CD4-positive, alpha-beta T cell (primary cell): ENCODE measurements at regions of chr7 and their contacts with region 1.

Region 1: GRCh38 chr7:99918959-99919813 is at the start of gene TRIM4:
- DNase-seq: peak; percentile 78 to 95 (median 86)
- ATAC-seq: peak; percentile 97
- H3K4me3 ChIP-seq: peak within 1 kb of the TSS; percentile 80
- H3K4me3 Mint-ChIP-seq: peak within 1 kb of the TSS; percentile 97
- H3K27ac ChIP-seq: peak within 1 kb of the TSS; percentile 78 to 80
- H3K27ac Mint-ChIP-seq: peak within 1 kb of the TSS; percentile 98
- H3K4me1 ChIP-seq: peaks cover 39% of the 10 kb centered on the region
- H3K4me1 Mint-ChIP-seq: peaks cover 61% of the 10 kb centered on the region
- H3K27me3 ChIP-seq: no peaks in the 10 kb centered on the region
- H3K27me3 Mint-ChIP-seq: no peaks in the 10 kb centered on the region
- CTCF ChIP-seq: peak; percentile 13
- total RNA-seq, gene TRIM4: 22.8 to 23.1 TPM

Region 2: DNA sequence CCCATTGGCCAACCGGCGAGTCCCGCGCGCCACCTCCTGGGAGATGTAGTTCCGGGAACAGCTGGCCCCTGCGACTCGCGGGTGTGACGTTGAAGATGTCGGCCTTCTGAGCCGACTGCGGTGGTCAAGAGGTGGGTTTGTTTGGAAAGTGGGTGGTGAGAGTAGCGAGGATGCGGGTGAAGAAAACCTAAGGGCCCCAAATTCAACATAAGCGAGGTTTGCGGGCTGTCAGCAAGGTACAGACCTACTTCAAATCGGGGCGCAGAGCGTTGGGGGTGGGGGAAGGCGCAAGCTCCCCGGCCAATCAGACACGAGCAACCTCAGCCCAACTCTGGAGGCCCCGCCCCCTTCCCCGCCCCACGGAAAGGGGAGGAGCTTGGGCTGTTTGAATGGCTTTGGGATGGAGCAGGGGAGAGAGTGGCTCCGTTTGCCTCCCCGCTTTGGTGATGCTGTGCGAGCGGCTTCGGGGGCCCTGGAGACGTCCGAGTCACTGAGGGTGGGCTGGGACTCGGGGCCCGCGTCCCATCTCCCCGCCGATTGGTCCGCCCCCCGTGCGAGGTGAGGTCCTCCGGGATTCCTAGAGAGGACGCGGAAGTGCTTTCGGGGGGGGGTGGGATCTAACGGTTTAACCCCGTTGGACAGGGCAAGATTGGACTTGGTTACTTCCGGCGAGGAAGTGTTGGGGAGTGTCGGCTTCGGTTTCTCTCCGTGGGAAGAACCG is 414.4 kb before region 1 on chr7 and contains the start of gene ZKSCAN5:
- CTCF ChIA-PET with region 1: no interaction called
- POLR2A ChIA-PET with region 1: interaction called, 11 read pairs
- intact Hi-C with region 1: no loop called
- DNase-seq: peak; percentile 94 to 98 (median 97)
- ATAC-seq: peak; percentile 85
- H3K4me3 ChIP-seq: peak within 1 kb of the TSS; percentile 90
- H3K4me3 Mint-ChIP-seq: peak within 1 kb of the TSS; percentile 100
- H3K27ac ChIP-seq: peak within 1 kb of the TSS; percentile 93
- H3K27ac Mint-ChIP-seq: peak within 1 kb of the TSS; percentile 95
- H3K4me1 ChIP-seq: peaks cover 42% of the 10 kb centered on the region
- H3K4me1 Mint-ChIP-seq: peaks cover 38% of the 10 kb centered on the region
- H3K27me3 ChIP-seq: no peaks in the 10 kb centered on the region
- H3K27me3 Mint-ChIP-seq: no peaks in the 10 kb centered on the region
- CTCF ChIP-seq: peak; percentile 16
- total RNA-seq, gene ZKSCAN5: 3.8 to 4.4 TPM

Region 3: DNA sequence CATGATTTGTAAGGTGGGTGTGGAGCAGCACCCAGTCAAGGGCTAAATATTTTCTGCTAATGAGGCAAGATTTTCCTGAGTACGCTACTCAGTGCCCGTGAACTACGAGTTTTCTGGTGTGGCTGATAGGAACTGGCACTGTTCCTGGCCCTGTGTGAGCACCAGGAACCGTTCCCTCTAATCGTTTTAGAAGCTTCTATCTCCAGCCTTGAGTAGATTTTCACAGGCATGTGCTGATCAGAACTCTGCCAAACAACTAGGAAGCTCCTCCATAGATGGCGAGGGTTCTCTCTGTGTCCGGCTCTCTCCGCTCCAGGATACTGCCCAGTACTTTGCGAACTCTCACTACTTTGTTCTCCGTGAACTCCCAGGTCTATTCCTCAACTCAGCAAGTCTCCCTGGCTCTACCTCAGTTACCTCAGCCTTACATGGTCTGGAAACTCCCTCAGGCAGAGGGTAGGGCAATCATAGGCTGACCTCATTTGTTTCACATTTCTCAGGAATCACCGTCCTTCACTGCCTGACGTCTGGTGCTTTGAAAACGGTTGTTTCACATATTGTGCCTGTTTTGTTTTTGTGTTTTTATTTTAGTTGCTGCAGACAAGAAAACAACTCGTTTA is 17.5 kb before region 1 on chr7:
- CTCF ChIA-PET with region 1: no interaction called
- POLR2A ChIA-PET with region 1: interaction called, 12 read pairs
- intact Hi-C with region 1: no loop called
- DNase-seq: no peak
- ATAC-seq: no peak
- H3K4me3 ChIP-seq: no peak overlapping the region
- H3K4me3 Mint-ChIP-seq: no peak overlapping the region
- H3K27ac ChIP-seq: no peak overlapping the region
- H3K27ac Mint-ChIP-seq: no peak overlapping the region
- H3K4me1 ChIP-seq: peaks cover 7% of the 10 kb centered on the region
- H3K4me1 Mint-ChIP-seq: no peaks in the 10 kb centered on the region
- H3K27me3 ChIP-seq: no peaks in the 10 kb centered on the region
- H3K27me3 Mint-ChIP-seq: no peaks in the 10 kb centered on the region
- CTCF ChIP-seq: no peak

Region 4: DNA sequence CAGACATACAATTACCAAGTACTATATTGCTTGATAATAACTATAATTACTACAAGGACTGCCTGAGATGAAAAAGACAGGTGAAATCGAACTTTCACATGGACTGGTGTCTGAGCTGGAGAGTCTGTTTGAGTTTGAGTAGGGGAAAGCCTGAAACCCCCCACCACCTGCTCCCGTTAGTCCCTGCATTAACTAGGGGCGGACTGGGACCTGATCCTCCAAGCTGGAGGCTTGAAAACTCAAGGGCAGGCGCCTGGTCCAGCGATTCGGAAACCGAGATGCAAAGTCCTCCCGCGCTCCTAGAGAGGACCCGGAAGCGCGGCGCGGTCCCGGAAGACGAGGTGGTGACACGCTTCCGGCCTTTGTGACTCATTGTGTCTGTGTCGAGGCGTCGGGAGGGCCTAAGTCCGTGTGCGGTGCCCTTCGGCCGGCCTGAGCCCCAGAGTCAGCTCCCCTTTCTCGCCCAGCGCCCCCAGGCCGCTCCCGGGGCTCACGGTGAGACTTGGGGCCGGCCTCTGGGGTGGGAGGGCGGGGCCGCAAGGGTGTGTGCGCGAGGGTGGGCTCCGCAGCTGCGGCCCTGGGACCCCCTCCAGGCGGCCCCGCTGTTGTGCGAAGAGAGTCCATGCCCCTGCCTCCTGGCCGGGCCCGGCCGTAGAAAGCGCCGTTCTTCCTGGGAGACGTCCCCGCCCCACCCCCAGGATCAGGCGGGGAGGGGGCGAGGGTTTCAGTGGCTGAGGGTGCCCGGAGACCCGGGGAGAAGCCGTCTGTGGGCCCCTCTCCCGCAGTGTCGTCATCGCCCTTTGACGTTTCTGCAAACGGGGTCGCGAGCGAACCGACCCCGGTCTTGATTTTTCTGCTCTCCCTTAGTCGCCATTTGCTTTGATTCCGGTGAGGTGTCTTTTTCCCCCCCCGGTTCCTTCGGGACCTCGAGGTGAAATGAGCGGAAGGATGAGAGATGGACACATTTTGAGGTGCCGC is 96.3 kb after region 1 on chr7 and contains the start of gene ZKSCAN1:
- CTCF ChIA-PET with region 1: no interaction called
- POLR2A ChIA-PET with region 1: interaction called, 17 read pairs
- intact Hi-C with region 1: no loop called
- DNase-seq: peak; percentile 70 to 96 (median 81)
- ATAC-seq: peak; percentile 94
- H3K4me3 ChIP-seq: peak within 1 kb of the TSS; percentile 95
- H3K4me3 Mint-ChIP-seq: peak within 1 kb of the TSS; percentile 97
- H3K27ac ChIP-seq: peak within 1 kb of the TSS; percentile 76 to 91
- H3K27ac Mint-ChIP-seq: peak within 1 kb of the TSS; percentile 94
- H3K4me1 ChIP-seq: peaks cover 31% of the 10 kb centered on the region
- H3K4me1 Mint-ChIP-seq: peaks cover 39% of the 10 kb centered on the region
- H3K27me3 ChIP-seq: no peaks in the 10 kb centered on the region
- H3K27me3 Mint-ChIP-seq: no peaks in the 10 kb centered on the region
- CTCF ChIP-seq: no peak
- total RNA-seq, gene ZKSCAN1: 42.3 to 45.0 TPM

Region 5: DNA sequence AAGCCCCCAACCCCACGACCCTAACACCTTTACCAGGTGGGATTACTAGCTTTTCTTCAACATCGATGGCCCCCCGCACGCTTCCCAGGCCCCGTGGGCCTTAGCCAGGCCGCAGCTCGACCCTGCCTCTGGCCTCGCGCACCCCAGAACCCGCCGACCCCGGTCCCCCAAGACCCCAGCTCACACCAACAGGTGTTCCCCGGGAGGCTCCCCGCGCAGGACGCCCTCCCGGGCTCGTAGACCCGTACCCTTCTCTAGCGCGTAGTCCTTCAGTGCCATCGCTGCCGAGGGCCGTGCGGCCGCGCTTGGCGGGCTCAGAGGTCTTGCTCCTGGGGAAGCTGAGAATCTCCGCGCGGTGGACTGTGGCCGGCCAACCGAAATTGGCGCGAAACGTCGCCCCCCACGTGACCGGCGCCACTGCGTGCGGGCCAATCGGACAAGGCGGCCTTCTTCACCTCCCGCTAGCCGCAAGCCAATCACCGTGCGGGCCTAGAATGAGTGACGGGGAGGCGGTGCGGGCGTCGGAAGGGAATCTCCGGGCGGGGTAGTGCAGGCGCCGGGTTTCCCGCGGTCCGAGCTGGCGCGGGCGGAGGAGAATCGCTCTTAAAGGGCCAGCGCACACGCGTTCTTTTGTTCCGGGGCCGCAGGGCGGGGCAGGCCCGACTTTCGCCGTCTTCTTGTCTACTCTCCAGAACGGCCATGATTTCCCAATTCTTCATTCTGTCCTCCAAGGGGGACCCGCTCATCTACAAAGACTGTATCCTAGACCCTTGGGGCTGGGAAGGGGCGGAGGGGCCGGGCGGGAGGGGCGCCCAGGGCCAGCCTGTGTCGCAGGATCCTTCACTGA is 182.1 kb after region 1 on chr7 and contains the starts of genes AP4M1 and MCM7:
- CTCF ChIA-PET with region 1: no interaction called
- POLR2A ChIA-PET with region 1: interaction called, 24 read pairs
- intact Hi-C with region 1: no loop called
- DNase-seq: peak; percentile 87 to 98 (median 93)
- ATAC-seq: peak; percentile 85
- H3K4me3 ChIP-seq: peak within 1 kb of the TSS; percentile 97
- H3K4me3 Mint-ChIP-seq: peak within 1 kb of the TSS; percentile 98
- H3K27ac ChIP-seq: peak within 1 kb of the TSS; percentile 90 to 95
- H3K27ac Mint-ChIP-seq: peak within 1 kb of the TSS; percentile 98
- H3K4me1 ChIP-seq: peaks cover 38% of the 10 kb centered on the region
- H3K4me1 Mint-ChIP-seq: peaks cover 47% of the 10 kb centered on the region
- H3K27me3 ChIP-seq: no peaks in the 10 kb centered on the region
- H3K27me3 Mint-ChIP-seq: no peaks in the 10 kb centered on the region
- CTCF ChIP-seq: no peak
- total RNA-seq, gene AP4M1: 2.8 to 4.0 TPM
- total RNA-seq, gene MCM7: 54.5 to 56.0 TPM

Region 6: DNA sequence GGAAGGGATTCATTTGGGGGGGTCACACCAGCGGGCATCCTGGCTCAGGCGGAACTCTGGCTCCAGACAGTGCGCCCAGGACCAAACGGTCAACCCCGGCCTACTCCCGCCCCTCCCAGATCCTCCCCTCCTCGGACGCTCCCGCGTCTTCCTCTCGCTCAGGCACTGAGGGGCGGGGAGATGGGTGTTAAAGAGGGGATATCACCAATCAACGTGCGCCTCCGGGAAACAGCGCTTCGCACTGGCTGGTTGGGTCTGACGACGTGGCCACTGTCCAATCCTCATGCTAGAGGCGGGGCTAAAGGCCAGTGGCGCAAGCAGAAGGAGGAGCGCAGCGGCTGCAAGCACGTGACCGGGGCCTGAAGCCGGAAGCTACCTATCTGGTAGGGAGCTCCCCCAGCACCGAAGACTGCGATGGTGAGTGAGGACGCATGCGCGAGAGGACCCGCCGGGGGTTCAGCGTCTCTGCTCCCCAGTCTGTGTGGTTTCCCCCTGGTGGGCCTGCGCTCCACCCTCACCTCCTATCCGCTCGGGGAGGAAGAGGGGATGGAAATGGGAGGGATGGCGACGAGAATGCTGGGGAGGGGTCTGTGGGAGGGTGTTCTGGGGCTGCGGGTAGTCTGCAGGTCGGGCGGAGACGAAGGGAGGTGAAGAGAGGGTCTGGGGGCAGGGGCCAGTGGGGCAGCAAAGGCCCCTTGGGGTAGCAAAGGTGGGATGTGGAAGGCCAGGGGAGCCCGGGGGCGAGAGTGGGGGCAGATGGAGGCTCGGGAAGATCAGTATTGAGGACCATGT is 229.6 kb after region 1 on chr7 and contains the start of gene LAMTOR4:
- CTCF ChIA-PET with region 1: no interaction called
- POLR2A ChIA-PET with region 1: interaction called, 15 read pairs
- intact Hi-C with region 1: no loop called
- DNase-seq: peak; percentile 94 to 100 (median 97)
- ATAC-seq: peak; percentile 95
- H3K4me3 ChIP-seq: peak within 1 kb of the TSS; percentile 99
- H3K4me3 Mint-ChIP-seq: peak within 1 kb of the TSS; percentile 92
- H3K27ac ChIP-seq: peak within 1 kb of the TSS; percentile 93 to 94
- H3K27ac Mint-ChIP-seq: peak within 1 kb of the TSS; percentile 95
- H3K4me1 ChIP-seq: peaks cover 41% of the 10 kb centered on the region
- H3K4me1 Mint-ChIP-seq: peaks cover 38% of the 10 kb centered on the region
- H3K27me3 ChIP-seq: no peaks in the 10 kb centered on the region
- H3K27me3 Mint-ChIP-seq: no peaks in the 10 kb centered on the region
- CTCF ChIP-seq: peak; percentile 9
- total RNA-seq, gene LAMTOR4: 107 to 125 TPM

Region 7: DNA sequence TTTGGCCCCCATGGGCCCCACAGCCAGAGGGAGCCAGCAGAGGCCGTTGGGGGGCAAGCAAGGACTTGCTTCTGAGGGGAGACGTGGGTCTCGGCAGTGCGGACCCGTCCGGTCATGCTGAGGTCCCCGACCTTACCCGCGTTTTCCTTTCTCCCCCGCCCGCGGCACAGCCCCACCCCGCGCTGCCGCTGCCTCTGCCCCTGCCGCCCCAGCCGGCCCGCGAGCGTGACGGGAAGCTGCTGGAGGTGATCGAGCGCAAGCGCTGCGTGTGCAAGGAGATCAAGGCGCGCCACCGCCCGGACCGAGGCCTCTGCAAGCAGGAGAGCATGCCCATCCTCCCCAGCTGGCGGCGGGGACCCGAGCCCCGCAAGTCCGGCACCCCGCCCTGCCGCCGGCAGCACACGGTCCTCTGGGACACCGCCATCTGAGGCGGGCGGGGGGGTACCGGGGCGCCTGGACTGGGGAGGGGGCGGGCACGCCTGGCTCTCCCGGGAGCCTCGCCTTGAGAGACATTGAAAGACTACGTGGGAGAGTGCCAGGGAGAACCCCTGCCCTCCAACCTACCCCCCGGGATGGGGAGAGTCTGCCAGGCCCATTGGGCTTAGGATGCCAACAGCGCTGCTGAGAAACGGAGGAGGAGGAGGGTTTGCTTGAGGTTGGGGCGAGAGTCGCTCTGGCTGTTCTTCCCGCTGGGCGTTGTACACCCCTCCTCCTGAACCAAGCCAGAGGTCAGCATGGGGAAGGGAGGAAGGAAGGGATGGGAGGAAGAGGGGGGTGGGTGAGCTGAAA is 574.5 kb after region 1 on chr7:
- CTCF ChIA-PET with region 1: no interaction called
- POLR2A ChIA-PET with region 1: no interaction called
- intact Hi-C with region 1: no loop called
- DNase-seq: peak; percentile 41 to 79 (median 58)
- ATAC-seq: peak; percentile 89
- H3K4me3 ChIP-seq: peak overlapping the region; percentile 35
- H3K4me3 Mint-ChIP-seq: peak overlapping the region; percentile 80
- H3K27ac ChIP-seq: no peak overlapping the region
- H3K27ac Mint-ChIP-seq: peak overlapping the region; percentile 24
- H3K4me1 ChIP-seq: peaks cover 29% of the 10 kb centered on the region
- H3K4me1 Mint-ChIP-seq: peaks cover 27% of the 10 kb centered on the region
- H3K27me3 ChIP-seq: no peaks in the 10 kb centered on the region
- H3K27me3 Mint-ChIP-seq: no peaks in the 10 kb centered on the region
- CTCF ChIP-seq: no peak